ENCODE measurements at regions of chr2 and their contacts with region 1.

Region 1: GRCh38 chr2:71187589-71187988 is 39.3 kb downstream of the PAIP2B start:
- DNase-seq: no peak
- H3K4me3 Mint-ChIP-seq: no peak overlapping the region
- H3K27ac Mint-ChIP-seq: no peak overlapping the region
- H3K4me1 Mint-ChIP-seq: peaks cover 6% of the 10 kb centered on the region
- H3K27me3 Mint-ChIP-seq: no peaks in the 10 kb centered on the region

Region 2: DNA sequence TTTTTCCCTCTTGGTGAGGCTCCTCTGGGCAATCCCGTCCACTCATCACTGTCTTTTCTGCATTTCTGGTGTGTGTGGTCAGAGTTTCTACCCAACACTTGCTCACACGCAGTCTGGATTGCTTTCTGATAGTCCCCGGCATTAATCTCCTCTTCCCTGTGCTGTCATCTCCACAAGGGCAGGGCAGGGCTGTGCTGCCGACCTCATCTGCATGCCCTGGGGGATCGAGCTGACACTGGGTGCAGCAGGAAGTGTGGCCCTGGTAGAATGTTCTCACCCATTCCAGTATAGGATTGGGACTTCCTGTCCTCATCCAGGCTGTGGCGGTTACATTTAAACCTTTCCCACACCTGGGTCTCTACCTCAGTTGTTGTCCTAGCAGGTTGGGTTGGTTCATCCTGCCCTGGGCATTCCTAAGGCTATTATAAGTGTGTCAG is 805.7 kb before region 1 on chr2:
- CTCF ChIA-PET with region 1: no interaction called
- intact Hi-C with region 1: loop called (anchors 5 kb)
- DNase-seq: no peak
- H3K4me3 Mint-ChIP-seq: no peak overlapping the region
- H3K27ac Mint-ChIP-seq: no peak overlapping the region
- H3K4me1 Mint-ChIP-seq: no peaks in the 10 kb centered on the region
- H3K27me3 Mint-ChIP-seq: no peaks in the 10 kb centered on the region

Region 3: DNA sequence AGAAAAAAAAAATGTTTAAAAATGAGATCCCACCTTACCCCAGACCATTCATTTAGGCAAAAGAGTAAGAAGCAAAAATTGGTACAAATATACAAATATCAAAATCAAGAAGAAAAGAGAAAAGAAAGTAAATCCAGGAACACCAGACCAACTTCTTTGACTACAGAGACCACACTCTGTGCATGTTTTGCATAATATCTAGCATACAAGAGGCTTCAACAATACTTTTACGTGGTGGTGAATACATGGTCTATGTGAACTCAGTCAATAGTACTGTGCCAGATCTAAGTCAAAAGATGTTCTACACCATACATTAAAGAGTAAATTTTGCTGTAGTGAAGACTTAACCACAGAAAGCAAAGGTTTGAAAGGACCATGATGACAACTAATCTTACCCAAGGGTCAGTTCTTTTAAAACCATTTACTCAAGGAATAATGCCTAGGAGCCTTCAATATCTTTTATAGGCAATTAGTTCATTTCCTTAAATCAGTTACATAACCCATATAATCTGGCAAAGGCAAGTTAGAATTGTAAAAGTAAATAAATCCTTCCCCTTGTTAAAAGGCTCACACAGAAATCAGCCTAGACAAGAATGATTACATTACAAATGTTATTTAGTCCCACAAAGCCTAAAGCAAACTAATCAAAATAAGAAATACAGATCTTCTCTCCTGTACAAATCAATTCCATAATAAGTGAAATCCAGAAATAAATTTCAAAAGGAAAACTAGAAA is 1523.0 kb after region 1 on chr2:
- CTCF ChIA-PET with region 1: no interaction called
- intact Hi-C with region 1: no loop called
- DNase-seq: no peak
- H3K4me3 Mint-ChIP-seq: no peak overlapping the region
- H3K27ac Mint-ChIP-seq: no peak overlapping the region
- H3K4me1 Mint-ChIP-seq: no peaks in the 10 kb centered on the region
- H3K27me3 Mint-ChIP-seq: no peaks in the 10 kb centered on the region